ENCODE measurements at regions of chr1 and their contacts with region 1.

Region 1: DNA sequence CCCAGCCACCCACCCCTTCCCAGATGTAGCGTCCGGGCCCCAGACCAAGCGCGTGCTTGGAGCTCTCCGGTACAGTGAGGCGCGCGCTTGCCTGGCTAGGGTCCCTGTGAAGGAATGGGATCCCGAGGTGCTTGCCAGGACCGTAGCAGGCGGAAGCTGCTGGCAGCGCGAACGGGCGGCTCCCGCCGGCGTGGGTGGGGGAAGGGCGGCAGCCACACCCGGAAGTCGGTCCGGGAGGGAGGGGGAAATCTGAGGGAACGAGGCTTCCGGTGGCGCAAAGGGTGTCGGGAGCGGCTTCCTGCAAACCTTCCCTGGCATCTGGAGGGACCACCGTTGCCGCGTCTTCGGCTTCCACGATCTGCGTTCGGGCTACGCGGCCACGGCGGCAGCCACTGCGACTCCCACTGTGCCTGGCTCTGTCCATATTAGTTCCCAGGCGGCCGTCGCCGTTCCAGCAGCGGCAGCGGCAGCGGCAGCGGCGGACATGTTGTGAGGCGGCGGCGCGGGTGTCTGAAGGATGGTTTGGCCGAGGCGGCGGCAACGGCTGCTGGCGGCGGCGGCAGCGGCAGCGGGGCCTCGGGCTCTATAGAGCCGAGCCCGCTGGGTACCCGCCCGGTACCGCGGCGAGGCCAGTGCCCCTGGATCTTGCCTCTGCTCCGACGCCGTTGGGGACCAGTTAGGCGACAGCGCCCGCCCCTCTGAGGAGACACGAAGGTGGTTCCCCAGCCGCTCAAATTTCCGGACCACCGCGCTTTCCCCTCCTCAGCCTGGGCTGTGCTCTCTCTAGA is at the start of gene DR1:
- DNase-seq: peak; percentile 98
- H3K4me3 Mint-ChIP-seq: peak within 1 kb of the TSS; percentile 99
- H3K27ac Mint-ChIP-seq: peak within 1 kb of the TSS; percentile 99
- H3K4me1 Mint-ChIP-seq: peaks cover 21% of the 10 kb centered on the region
- H3K27me3 Mint-ChIP-seq: no peaks in the 10 kb centered on the region
- total RNA-seq, gene DR1: 100 and 107 TPM in 2 replicates

Region 2: DNA sequence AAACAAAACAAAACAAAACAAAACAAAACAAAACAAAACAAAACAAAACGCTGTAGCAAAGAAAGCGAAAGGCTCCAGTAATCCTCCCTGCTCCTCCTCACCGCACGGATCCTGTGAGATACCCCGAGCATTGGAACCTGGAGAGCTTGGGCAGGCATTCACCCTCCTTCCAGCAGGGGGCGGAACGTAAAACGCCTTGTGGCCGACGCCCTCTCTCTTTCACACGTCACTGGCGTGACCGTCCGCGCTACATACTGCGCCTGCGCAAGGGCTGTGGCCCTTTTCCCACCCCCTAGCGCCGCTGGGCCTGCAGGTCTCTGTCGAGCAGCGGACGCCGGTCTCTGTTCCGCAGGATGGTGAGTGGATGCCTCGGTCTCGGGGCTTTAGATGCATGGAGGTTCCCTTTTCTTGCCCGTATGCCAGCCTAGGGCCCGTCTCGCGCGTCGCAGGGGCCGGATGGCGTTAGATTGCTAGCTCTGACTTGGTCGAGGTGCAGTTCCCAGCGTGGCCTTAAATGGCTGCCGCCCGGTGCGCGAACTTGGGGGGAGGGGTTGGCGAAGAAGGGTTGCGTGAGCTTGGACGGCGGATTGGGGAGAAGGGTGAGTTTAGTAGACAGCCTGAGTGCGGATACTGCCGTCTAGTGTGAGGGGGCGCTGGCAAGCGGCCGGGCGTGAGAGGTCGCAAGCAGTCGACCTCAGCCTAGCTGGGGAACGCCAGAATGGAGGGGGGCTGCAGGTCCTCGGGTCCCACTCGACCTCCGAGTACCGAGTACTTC is 513.9 kb before region 1 on chr1 and contains the start of gene RPL5:
- intact Hi-C with region 1: loop called (anchors 5 kb)
- DNase-seq: peak; percentile 99
- H3K4me3 Mint-ChIP-seq: peak within 1 kb of the TSS; percentile 99
- H3K27ac Mint-ChIP-seq: peak within 1 kb of the TSS; percentile 98
- H3K4me1 Mint-ChIP-seq: peaks cover 43% of the 10 kb centered on the region
- H3K27me3 Mint-ChIP-seq: peaks cover 2% of the 10 kb centered on the region
- total RNA-seq, gene RPL5: 1,231 and 1,282 TPM in 2 replicates

Region 3: GRCh38 chr1:93078986-93079654 is 266.7 kb before region 1 on chr1 and contains the start of gene MTF2:
- intact Hi-C with region 1: loop called (anchors 5 kb)
- DNase-seq: peak; percentile 98
- H3K4me3 Mint-ChIP-seq: peak within 1 kb of the TSS; percentile 99
- H3K27ac Mint-ChIP-seq: peak within 1 kb of the TSS; percentile 94
- H3K4me1 Mint-ChIP-seq: peaks cover 35% of the 10 kb centered on the region
- H3K27me3 Mint-ChIP-seq: no peaks in the 10 kb centered on the region
- total RNA-seq, gene MTF2: 63.7 and 64.3 TPM in 2 replicates

Region 4: DNA sequence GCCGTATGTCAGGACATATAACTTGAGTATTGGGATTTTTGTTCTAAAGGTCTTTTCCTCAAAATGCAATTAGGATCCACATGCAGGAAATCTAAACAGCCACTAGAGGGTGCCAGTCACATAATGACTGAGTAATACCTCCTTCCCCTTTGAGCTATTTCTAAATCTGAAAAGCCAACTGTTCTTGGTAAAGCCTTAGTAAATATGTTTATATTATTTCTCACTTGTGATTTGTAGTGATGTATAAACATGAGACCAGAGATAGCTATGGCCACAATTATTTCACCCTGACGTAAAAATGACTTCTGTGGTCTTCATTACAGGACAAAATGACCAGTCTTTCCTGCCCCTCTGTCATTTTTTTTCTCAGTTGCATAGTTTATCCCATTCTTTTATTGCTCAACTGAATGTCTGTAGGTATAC is 41.1 kb before region 1 on chr1:
- intact Hi-C with region 1: loop called (anchors 2 kb)
- DNase-seq: peak; percentile 86
- H3K4me3 Mint-ChIP-seq: no peak overlapping the region
- H3K27ac Mint-ChIP-seq: no peak overlapping the region
- H3K4me1 Mint-ChIP-seq: no peaks in the 10 kb centered on the region
- H3K27me3 Mint-ChIP-seq: no peaks in the 10 kb centered on the region

Region 5: DNA sequence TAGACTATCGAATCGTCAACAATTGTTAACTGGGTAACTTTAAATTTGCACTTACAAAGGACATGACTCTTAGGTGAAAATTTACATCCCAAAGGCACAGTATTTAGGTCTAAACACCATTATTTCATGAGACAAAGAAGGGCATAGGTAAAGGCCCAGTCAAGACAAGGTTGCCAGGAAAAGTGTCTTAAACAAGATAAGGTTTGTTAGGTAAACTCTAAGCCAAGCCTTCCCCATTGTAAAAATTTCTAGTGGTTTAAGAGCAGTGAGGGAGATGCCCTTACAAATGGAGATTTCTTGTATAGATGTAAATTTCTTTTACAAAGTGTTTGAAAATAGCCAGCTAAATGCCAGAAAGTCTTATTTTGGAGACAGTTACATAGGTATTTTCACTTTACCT is 65.2 kb after region 1 on chr1:
- intact Hi-C with region 1: no loop called
- DNase-seq: no peak
- H3K4me3 Mint-ChIP-seq: no peak overlapping the region
- H3K27ac Mint-ChIP-seq: no peak overlapping the region
- H3K4me1 Mint-ChIP-seq: no peaks in the 10 kb centered on the region
- H3K27me3 Mint-ChIP-seq: peaks cover 19% of the 10 kb centered on the region

Region 6: GRCh38 chr1:93519196-93519827 is 173.5 kb after region 1 on chr1:
- intact Hi-C with region 1: no loop called
- DNase-seq: no peak
- H3K4me3 Mint-ChIP-seq: no peak overlapping the region
- H3K27ac Mint-ChIP-seq: no peak overlapping the region
- H3K4me1 Mint-ChIP-seq: no peaks in the 10 kb centered on the region
- H3K27me3 Mint-ChIP-seq: peaks cover 12% of the 10 kb centered on the region

Region 7: DNA sequence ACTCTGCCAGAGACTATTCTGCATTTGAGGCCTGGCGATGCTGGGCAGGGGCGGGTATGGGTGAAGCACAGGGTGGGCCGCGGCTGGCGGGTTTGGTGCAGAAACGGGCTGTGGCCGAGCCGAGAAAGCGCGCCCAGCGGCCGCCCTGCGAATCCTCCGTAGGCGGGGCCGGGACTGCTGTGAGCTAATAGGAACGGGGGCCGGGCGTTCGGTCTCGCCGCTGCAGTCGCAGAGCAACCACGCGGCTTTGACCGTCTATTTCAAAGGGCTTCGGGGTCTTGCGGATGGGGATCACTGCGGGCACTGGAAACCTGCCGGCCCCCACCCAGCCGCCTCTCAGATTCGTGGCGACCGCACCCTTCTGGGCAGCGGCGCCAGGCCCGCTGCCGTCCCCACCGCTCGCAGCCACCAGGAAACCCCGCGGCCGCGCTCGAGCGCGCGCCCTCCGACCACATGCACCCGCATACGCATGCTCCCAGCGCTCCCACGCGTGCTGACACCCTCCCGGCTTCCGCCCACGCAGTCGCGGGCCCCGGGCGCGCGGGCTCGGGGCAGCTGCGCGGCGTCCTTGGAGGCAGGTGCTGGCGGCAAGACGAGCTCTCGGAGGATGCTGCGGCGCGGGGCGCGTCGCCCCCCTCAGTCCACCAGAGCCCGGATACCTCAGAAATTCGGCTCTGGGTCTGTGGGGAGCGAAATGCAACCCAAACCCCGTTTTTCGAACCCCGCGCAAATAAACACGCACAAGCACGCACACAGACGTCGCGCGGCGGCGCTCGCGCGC is 500.6 kb after region 1 on chr1:
- intact Hi-C with region 1: loop called (anchors 5 kb)
- DNase-seq: peak; percentile 95
- H3K4me3 Mint-ChIP-seq: peak overlapping the region; percentile 98
- H3K27ac Mint-ChIP-seq: peak overlapping the region; percentile 95
- H3K4me1 Mint-ChIP-seq: peaks cover 26% of the 10 kb centered on the region
- H3K27me3 Mint-ChIP-seq: peaks cover 8% of the 10 kb centered on the region

Measured in activated CD4-positive, alpha-beta T cell treated with anti-CD3 and anti-CD28 coated beads, Interleukin-2, amount 10 ng/mL, durations not matched to agents 24 days and 14 days (primary cell).